Dendritic cell treated with granulocyte-macrophage colony-stimulating factor and Interleukin-4, amounts not matched to agents 40 ng/mL and 50 ng/mL, for 4 days (primary cell): ENCODE measurements at regions of chr6 and their contacts with region 1.

Region 1: GRCh38 chr6:138001750-138002349 is 105.4 kb downstream of the PERP start:
- H3K4me3 Mint-ChIP-seq: no peak overlapping the region
- H3K27ac Mint-ChIP-seq: no peak overlapping the region
- H3K4me1 Mint-ChIP-seq: no peaks in the 10 kb centered on the region
- H3K27me3 Mint-ChIP-seq: peaks cover 2% of the 10 kb centered on the region

Region 2: GRCh38 chr6:137661601-137662000 is 340.2 kb before region 1 on chr6:
- intact Hi-C with region 1: loop called (anchors 5 kb)
- H3K4me3 Mint-ChIP-seq: no peak overlapping the region
- H3K27ac Mint-ChIP-seq: no peak overlapping the region
- H3K4me1 Mint-ChIP-seq: no peaks in the 10 kb centered on the region
- H3K27me3 Mint-ChIP-seq: no peaks in the 10 kb centered on the region

Region 3: DNA sequence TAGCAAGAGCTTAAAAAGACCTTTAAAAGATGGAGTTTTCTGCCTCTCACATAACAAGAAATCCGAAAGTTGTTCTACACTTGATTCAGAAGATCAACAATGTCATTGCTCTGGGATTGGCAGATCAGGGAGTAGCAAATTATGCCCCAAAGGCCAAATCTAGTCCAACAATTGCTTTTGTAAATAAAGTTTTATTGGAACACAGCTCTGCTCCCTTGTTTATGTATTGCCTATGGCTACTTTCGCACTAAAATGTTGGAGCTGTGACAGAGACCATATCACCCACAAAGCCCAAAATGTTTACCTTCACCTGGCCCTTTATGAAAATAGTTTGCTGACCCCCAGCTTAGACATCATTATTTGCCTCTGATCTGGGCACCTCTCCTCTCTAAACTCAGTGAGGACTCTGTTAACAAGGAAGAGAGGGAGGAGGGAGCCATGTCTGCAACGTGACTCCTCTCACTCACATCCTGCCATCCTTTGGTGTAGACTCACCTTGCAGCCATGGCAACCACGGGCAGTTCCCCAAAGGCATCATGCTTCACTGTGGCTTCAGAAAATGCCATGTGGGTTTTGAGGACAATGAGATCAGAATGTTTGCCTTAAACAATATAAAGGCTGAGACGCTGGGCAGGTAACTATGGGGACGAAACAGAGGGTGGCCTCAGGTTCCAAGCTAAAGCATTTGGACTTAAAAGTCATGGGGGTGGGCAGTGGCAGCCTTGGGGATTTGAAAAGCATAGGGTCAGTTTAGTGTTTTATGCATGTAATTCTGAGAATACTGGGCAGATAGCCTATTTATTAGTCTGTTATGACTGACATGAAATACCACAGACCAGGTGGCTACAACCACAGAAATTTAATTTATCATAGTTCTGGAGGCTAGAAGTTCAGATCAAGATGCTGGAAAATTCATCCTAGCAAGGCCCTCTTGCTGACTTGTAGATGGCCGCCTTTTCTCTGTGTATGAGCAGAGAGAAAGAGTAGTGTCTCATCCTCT is 284.5 kb before region 1 on chr6:
- intact Hi-C with region 1: no loop called
- H3K4me3 Mint-ChIP-seq: no peak overlapping the region
- H3K27ac Mint-ChIP-seq: no peak overlapping the region
- H3K4me1 Mint-ChIP-seq: peaks cover 4% of the 10 kb centered on the region
- H3K27me3 Mint-ChIP-seq: peaks cover 78% of the 10 kb centered on the region

Region 4: GRCh38 chr6:137799950-137800568 is 201.8 kb before region 1 on chr6:
- intact Hi-C with region 1: loop called (anchors 10 kb)
- H3K4me3 Mint-ChIP-seq: no peak overlapping the region
- H3K27ac Mint-ChIP-seq: no peak overlapping the region
- H3K4me1 Mint-ChIP-seq: peaks cover 19% of the 10 kb centered on the region
- H3K27me3 Mint-ChIP-seq: peaks cover 20% of the 10 kb centered on the region

Region 5: GRCh38 chr6:137951064-137951597 is 50.7 kb before region 1 on chr6:
- intact Hi-C with region 1: loop called (anchors 5 kb)
- H3K4me3 Mint-ChIP-seq: no peak overlapping the region
- H3K27ac Mint-ChIP-seq: no peak overlapping the region
- H3K4me1 Mint-ChIP-seq: peaks cover 25% of the 10 kb centered on the region
- H3K27me3 Mint-ChIP-seq: peaks cover 2% of the 10 kb centered on the region

Region 6: GRCh38 chr6:138109042-138109997 is 107.5 kb after region 1 on chr6:
- intact Hi-C with region 1: loop called (anchors 1 kb)
- H3K4me3 Mint-ChIP-seq: no peak overlapping the region
- H3K27ac Mint-ChIP-seq: no peak overlapping the region
- H3K4me1 Mint-ChIP-seq: peaks cover 16% of the 10 kb centered on the region
- H3K27me3 Mint-ChIP-seq: peaks cover 53% of the 10 kb centered on the region

Region 7: GRCh38 chr6:138485005-138485545 is 483.2 kb after region 1 on chr6:
- intact Hi-C with region 1: no loop called
- H3K4me3 Mint-ChIP-seq: no peak overlapping the region
- H3K27ac Mint-ChIP-seq: no peak overlapping the region
- H3K4me1 Mint-ChIP-seq: no peaks in the 10 kb centered on the region
- H3K27me3 Mint-ChIP-seq: no peaks in the 10 kb centered on the region